CD4-positive, alpha-beta T cell (primary cell): ENCODE measurements at regions of chr9 and their contacts with region 1.

Region 1: GRCh38 chr9:123863164-123863855 is 66.6 kb downstream of the DENND1A start:
- DNase-seq: no peak
- ATAC-seq: no peak
- H3K4me3 ChIP-seq: no peak overlapping the region
- H3K4me3 Mint-ChIP-seq: no peak overlapping the region
- H3K27ac ChIP-seq: no peak overlapping the region
- H3K27ac Mint-ChIP-seq: no peak overlapping the region
- H3K4me1 ChIP-seq: peaks cover 7% of the 10 kb centered on the region
- H3K4me1 Mint-ChIP-seq: peaks cover 26% of the 10 kb centered on the region
- H3K27me3 ChIP-seq: no peaks in the 10 kb centered on the region
- H3K27me3 Mint-ChIP-seq: no peaks in the 10 kb centered on the region
- CTCF ChIP-seq: no peak

Region 2: GRCh38 chr9:123929870-123930831 is 66.8 kb after region 1 on chr9 and contains the start of gene DENND1A:
- CTCF ChIA-PET with region 1: no interaction called
- POLR2A ChIA-PET with region 1: no interaction called
- intact Hi-C with region 1: loop called in 1 of 2 experiments (anchors 10 kb)
- DNase-seq: peak; percentile 76 to 94 (median 85)
- ATAC-seq: peak; percentile 91
- H3K4me3 ChIP-seq: peak within 1 kb of the TSS; percentile 77
- H3K4me3 Mint-ChIP-seq: peak within 1 kb of the TSS; percentile 99
- H3K27ac ChIP-seq: peak within 1 kb of the TSS in 1 of 2 donors; percentile 34
- H3K27ac Mint-ChIP-seq: peak within 1 kb of the TSS; percentile 80
- H3K4me1 ChIP-seq: peaks cover 21% of the 10 kb centered on the region
- H3K4me1 Mint-ChIP-seq: peaks cover 36% of the 10 kb centered on the region
- H3K27me3 ChIP-seq: no peaks in the 10 kb centered on the region
- H3K27me3 Mint-ChIP-seq: no peaks in the 10 kb centered on the region
- CTCF ChIP-seq: no peak
- total RNA-seq, gene DENND1A: 20.0 to 20.6 TPM